Esophagus muscularis mucosa (tissue), 4 donors: ENCODE measurements at regions of chr11 and their contacts with region 1.

Region 1: DNA sequence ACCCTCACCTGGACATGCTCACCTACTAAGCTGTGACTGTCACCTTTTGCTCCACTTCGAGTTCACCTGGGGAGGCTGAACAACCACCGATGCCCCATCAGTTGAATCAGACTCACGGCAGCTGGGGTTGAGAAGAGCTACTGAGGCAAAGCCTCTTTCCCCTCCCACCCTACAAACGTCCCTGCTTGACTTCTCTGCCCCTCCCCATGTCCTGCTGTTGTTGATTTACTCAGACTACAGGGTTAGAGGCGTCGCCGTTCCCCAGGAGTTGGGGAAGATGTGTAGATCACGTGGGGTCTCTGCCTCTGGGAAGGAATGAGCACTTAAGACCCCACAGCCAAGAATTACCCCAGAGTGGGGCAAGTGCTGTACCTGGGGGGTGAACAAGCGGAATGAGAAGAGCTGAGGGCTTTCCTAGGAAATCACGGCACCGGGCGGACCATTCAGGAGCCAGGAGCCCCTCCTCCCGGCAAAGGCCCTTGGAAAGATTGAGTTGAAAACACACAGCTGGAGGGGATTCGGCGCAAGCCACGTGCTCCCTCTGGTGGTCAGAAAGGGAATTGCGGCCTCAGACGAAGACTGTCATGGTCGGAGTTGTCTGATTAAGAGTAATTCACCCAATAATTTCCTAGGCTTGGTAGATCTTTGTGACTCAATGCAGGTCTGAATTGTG is 7.0 kb downstream of the FXYD2 start:
- DNase-seq: peak; percentile 98
- H3K4me3 ChIP-seq: peak overlapping the region in 3 of 4 donors; percentile 8 to 36 (median 33)
- H3K27ac ChIP-seq: peak overlapping the region; percentile 41 to 66 (median 56)
- H3K4me1 ChIP-seq: peaks cover 16 to 56% (median 49%) of the 10 kb centered on the region in 4 donors
- H3K27me3 ChIP-seq: peaks cover 0 to 14% (median 0%) of the 10 kb centered on the region in 4 donors
- CTCF ChIP-seq: peak in 2 of 3 experiments; percentile 97 to 99
- EP300 ChIP-seq: no peak
- POLR2A ChIP-seq: no peak

Region 2: GRCh38 chr11:117426269-117426685 is 391.2 kb before region 1 on chr11:
- intact Hi-C with region 1: loop called (anchors 5 kb)
- DNase-seq: no peak
- H3K4me3 ChIP-seq: no peak overlapping the region
- H3K27ac ChIP-seq: no peak overlapping the region
- H3K4me1 ChIP-seq: peaks cover 0 to 8% (median 7%) of the 10 kb centered on the region in 4 donors
- H3K27me3 ChIP-seq: peaks cover 0 to 7% (median 0%) of the 10 kb centered on the region in 4 donors
- CTCF ChIP-seq: peak; percentile 92 to 99 (median 94)
- EP300 ChIP-seq: no peak
- POLR2A ChIP-seq: no peak

Region 3: GRCh38 chr11:117443266-117444195 is 374.0 kb before region 1 on chr11:
- intact Hi-C with region 1: loop called (anchors 5 kb)
- DNase-seq: no peak
- H3K4me3 ChIP-seq: peak overlapping the region in 1 of 4 donors; percentile 8
- H3K27ac ChIP-seq: no peak overlapping the region
- H3K4me1 ChIP-seq: peaks cover 0 to 8% (median 5%) of the 10 kb centered on the region in 4 donors
- H3K27me3 ChIP-seq: peaks cover 0 to 37% (median 4%) of the 10 kb centered on the region in 4 donors
- CTCF ChIP-seq: peak; percentile 32 to 57 (median 46)
- EP300 ChIP-seq: no peak
- POLR2A ChIP-seq: no peak

Region 4: GRCh38 chr11:117828611-117829368 is 11.3 kb after region 1 on chr11:
- intact Hi-C with region 1: no loop called
- DNase-seq: no peak
- H3K4me3 ChIP-seq: no peak overlapping the region
- H3K27ac ChIP-seq: peak overlapping the region; percentile 55 to 73 (median 61)
- H3K4me1 ChIP-seq: peaks cover 26 to 73% (median 52%) of the 10 kb centered on the region in 4 donors
- H3K27me3 ChIP-seq: peaks cover 0 to 61% (median 0%) of the 10 kb centered on the region in 4 donors
- CTCF ChIP-seq: no peak
- EP300 ChIP-seq: no peak
- POLR2A ChIP-seq: no peak